Lower leg skin (tissue), 4 donors: ENCODE measurements at regions of chr4 and their contacts with region 1.

Region 1: GRCh38 chr4:25970226-25970675 is 56.2 kb downstream of the SMIM20 start:
- DNase-seq: no peak
- H3K4me3 ChIP-seq: no peak overlapping the region
- CTCF ChIP-seq: no peak
- POLR2A ChIP-seq: no peak

Region 2: GRCh38 chr4:25941457-25942221 is 28.6 kb before region 1 on chr4:
- intact Hi-C with region 1: loop called (anchors 1 kb)
- DNase-seq: no peak
- H3K4me3 ChIP-seq: no peak overlapping the region
- CTCF ChIP-seq: no peak
- POLR2A ChIP-seq: no peak

Region 3: DNA sequence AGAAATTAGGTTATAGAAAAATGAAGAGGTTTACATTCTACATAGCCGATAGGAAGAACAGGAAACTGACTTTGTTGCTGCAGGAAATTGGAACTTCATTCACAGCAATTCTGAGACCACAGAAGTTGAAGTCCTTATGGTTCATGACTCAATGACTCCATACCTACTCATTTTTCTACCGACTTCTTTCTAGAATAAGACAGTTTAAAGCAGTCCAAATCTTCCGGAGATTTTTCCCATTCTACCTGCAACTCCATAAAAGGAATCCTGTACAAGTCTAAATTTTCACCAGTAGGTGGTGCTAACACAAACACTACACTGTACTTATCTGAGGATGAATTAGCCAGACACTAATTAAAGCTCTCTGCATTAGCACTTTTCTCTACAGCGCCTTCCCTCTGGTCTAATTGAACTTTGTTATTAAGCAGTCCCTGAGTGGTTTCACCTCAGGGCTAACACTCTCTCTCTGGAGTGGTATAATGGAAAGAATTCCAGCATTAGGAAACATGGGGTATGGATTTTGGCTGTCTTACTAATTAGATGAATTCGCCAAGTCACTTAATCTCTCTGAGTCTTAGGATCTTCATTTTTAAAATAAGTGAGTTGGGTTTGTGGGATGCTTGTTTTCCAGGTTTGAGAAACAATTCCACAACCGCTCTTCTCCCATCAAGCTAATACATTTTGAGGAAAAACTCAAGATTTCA is 111.7 kb after region 1 on chr4:
- intact Hi-C with region 1: no loop called
- DNase-seq: no peak
- H3K4me3 ChIP-seq: no peak overlapping the region
- CTCF ChIP-seq: no peak
- POLR2A ChIP-seq: no peak